ENCODE measurements at regions of chr17 and their contacts with region 1.

Region 1: GRCh38 chr17:7687908-7688807 is at the start of gene WRAP53:
- DNase-seq: peak; percentile 99
- H3K4me3 ChIP-seq: peak within 1 kb of the TSS; percentile 75 to 96 (median 79)
- H3K27ac ChIP-seq: peak within 1 kb of the TSS; percentile 93
- H3K4me1 ChIP-seq: peaks cover 26% of the 10 kb centered on the region
- H3K27me3 ChIP-seq: no peaks in the 10 kb centered on the region
- CTCF ChIP-seq: peak; percentile 97 to 99
- POLR2A ChIP-seq: peak; percentile 70
- total RNA-seq, gene WRAP53: 23.7 and 28.0 TPM in 2 replicates

Region 2: DNA sequence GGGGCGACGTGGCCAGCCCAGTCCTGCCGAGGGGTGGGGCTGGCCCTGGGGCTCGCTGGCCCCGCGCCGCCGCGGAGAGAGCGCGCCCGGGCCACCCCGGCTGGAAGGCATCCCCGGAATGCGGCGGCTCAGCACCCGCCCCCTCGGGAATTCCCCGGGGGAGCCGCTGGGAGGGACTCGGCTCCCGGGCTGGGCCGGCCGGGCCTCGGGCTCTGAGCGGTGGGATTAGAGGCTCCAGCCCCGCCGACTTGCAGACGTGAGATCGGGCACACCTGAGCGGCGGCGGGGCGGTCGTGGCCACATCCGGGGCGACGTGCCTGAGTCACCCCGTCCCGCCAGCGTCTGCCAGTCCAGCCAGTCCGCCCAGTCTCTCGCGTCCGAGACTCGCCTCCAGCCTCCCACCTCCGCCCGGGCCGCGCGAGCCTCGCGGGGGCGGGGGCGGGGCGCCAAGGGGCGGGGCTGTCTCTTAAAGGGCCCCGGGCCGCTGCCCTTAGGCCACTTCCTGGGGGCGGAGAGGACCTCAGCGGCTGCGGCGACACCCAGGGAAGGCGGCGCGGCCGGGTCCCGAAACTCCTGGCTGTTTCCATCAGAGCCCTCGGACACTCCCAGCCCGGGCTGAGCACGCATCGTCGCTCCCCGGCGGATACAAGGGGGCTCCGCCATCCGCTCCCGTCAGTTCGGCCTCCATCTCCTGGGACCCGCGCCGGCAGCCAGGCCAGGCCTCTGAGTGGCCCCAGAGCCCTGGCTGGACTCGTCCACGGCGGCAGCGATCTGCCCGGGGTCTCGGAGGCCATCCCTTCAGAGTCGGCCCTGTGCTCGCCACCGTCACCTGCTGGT is 336.3 kb before region 1 on chr17 and contains the start of gene KCTD11:
- CTCF ChIA-PET with region 1: interaction called, 6 read pairs
- POLR2A ChIA-PET with region 1: no interaction called
- dilution Hi-C with region 1: no loop called
- intact Hi-C with region 1: loop called (anchors 5 kb)
- DNase-seq: peak; percentile 76
- H3K4me3 ChIP-seq: peak within 1 kb of the TSS; percentile 54 to 78 (median 70)
- H3K27ac ChIP-seq: peak within 1 kb of the TSS; percentile 78
- H3K4me1 ChIP-seq: peaks cover 17% of the 10 kb centered on the region
- H3K27me3 ChIP-seq: no peaks in the 10 kb centered on the region
- CTCF ChIP-seq: peak in 1 of 2 donors; percentile 69
- POLR2A ChIP-seq: peak; percentile 57
- total RNA-seq, gene KCTD11: 3.5 and 3.8 TPM in 2 replicates

Region 3: DNA sequence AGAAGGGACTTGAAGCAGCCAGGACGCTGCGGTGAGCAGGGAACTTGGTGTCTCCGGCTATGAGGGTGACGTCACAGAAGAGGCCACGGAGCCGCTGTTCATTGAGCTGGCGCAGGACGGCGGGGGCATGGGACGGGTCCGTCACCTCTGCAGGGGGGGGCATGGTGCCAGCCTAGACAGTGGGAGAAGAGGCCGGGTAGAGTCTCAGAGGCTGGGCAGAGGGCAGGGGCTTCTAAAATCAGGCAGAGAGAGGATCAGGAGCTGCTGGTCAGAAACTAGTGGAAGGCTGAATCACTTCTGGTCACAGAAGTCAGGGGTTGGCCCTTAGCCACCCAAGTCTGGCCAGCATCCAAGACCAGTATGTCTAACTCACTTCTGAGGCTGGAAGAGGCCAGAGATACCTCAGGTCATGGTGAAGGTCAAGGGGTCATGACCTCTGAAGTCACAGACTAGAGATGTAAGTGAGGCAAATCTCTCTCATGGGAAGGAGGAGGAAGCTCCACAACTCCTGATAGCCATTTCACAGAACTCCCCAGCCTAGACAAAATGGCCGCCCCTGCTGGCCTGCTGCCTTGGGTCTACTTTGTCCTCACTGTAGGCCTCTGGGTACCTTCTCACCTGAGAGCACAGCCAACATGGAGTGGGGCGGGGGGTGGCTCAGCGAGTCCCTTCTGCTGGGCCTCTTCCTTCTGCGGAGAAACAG is 221.4 kb before region 1 on chr17:
- CTCF ChIA-PET with region 1: no interaction called
- POLR2A ChIA-PET with region 1: no interaction called
- dilution Hi-C with region 1: no loop called
- intact Hi-C with region 1: no loop called
- DNase-seq: peak; percentile 53
- H3K4me3 ChIP-seq: no peak overlapping the region
- H3K27ac ChIP-seq: no peak overlapping the region
- H3K4me1 ChIP-seq: no peaks in the 10 kb centered on the region
- H3K27me3 ChIP-seq: no peaks in the 10 kb centered on the region
- CTCF ChIP-seq: no peak
- POLR2A ChIP-seq: no peak

Region 4: DNA sequence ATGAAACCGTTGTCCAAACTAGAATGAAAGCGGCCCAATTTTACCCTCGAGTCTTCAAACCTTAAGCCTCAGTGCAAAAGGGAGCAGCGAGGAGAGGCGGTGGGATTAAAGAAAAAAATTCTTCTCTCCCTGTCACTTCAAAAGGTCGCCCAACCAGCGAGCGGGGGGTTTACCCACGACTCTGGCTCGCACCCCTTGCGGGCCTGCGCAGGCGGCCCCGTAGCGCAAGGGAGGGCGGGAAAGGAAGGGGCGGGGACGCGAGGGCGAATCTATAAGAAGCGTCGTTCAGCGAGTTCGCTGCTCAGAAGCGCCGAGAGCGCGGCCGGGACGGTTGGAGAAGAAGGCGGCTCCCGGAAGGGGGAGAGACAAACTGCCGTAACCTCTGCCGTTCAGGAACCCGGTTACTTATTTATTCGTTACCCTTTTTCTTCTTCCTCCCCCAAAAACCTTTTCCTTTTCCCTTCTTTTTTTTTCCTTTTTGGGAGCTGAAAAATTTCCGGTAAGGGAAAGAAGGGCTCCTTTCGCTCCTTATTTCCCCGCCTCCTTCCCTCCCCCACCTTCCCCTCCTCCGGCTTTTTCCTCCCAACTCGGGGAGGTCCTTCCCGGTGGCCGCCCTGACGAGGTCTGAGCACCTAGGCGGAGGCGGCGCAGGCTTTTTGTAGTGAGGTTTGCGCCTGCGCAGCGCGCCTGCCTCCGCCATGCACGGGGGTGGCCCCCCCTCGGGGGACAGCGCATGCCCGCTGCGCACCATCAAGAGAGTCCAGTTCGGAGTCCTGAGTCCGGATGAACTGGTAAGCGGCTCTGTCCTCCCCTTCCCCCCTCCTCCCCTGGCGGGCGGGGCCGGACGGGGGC is 203.9 kb before region 1 on chr17 and contains the start of gene POLR2A:
- CTCF ChIA-PET with region 1: no interaction called
- POLR2A ChIA-PET with region 1: no interaction called
- dilution Hi-C with region 1: no loop called
- intact Hi-C with region 1: loop called (anchors 10 kb)
- DNase-seq: peak; percentile 99
- H3K4me3 ChIP-seq: peak within 1 kb of the TSS; percentile 45 to 88 (median 76)
- H3K27ac ChIP-seq: peak within 1 kb of the TSS; percentile 100
- H3K4me1 ChIP-seq: peaks cover 28% of the 10 kb centered on the region
- H3K27me3 ChIP-seq: no peaks in the 10 kb centered on the region
- CTCF ChIP-seq: no peak
- POLR2A ChIP-seq: peak; percentile 100
- total RNA-seq, gene POLR2A: 145 and 151 TPM in 2 replicates

Region 5: GRCh38 chr17:7614422-7615264 is 73.5 kb before region 1 on chr17 and contains the start of gene FXR2:
- CTCF ChIA-PET with region 1: interaction called, 11 read pairs
- POLR2A ChIA-PET with region 1: interaction called, 7 read pairs
- dilution Hi-C with region 1: no loop called
- intact Hi-C with region 1: loop called (anchors 1 kb)
- DNase-seq: peak; percentile 100
- H3K4me3 ChIP-seq: peak within 1 kb of the TSS; percentile 55 to 97 (median 73)
- H3K27ac ChIP-seq: peak within 1 kb of the TSS; percentile 56
- H3K4me1 ChIP-seq: peaks cover 24% of the 10 kb centered on the region
- H3K27me3 ChIP-seq: no peaks in the 10 kb centered on the region
- CTCF ChIP-seq: peak; percentile 68 to 79
- POLR2A ChIP-seq: peak; percentile 67
- total RNA-seq, gene FXR2: 33.1 and 40.1 TPM in 2 replicates

Region 6: DNA sequence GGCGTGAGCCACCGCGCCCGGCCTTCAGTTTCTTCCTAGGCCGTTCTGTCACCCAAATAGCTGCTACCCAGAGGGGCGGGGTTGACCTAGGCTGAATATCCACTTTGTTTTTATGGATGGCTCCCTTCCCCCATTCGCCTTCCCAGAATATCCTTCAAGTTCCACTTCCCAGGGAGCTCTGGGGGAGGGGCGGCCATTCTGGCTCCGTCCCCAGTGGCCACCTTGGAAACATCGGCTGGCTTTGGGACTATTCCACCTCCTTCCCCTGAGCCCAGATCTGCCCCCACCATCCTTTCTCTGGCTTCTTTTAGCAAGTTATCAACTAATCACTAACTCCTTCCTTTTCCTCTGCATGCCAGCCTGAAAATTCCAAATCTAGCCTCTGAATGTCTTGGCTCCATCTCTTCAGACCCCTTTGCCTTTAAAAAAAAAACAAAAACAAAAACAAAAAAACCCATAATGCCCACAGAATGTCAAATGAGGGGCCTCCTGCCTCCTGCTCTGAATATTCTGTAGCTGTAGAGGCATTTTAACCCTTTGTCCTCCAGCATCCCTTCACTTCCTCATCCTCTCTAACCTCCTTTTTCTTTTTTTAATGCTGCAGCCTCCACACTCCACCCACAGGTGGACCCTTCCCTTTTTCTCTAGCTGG is 31.1 kb before region 1 on chr17:
- CTCF ChIA-PET with region 1: interaction called, 11 read pairs
- POLR2A ChIA-PET with region 1: interaction called, 12 read pairs
- dilution Hi-C with region 1: no loop called
- intact Hi-C with region 1: no loop called
- DNase-seq: no peak
- H3K4me3 ChIP-seq: no peak overlapping the region
- H3K27ac ChIP-seq: no peak overlapping the region
- H3K4me1 ChIP-seq: no peaks in the 10 kb centered on the region
- H3K27me3 ChIP-seq: peaks cover 18 to 24% of the 10 kb centered on the region in 2 experiments
- CTCF ChIP-seq: no peak
- POLR2A ChIP-seq: no peak

Region 7: DNA sequence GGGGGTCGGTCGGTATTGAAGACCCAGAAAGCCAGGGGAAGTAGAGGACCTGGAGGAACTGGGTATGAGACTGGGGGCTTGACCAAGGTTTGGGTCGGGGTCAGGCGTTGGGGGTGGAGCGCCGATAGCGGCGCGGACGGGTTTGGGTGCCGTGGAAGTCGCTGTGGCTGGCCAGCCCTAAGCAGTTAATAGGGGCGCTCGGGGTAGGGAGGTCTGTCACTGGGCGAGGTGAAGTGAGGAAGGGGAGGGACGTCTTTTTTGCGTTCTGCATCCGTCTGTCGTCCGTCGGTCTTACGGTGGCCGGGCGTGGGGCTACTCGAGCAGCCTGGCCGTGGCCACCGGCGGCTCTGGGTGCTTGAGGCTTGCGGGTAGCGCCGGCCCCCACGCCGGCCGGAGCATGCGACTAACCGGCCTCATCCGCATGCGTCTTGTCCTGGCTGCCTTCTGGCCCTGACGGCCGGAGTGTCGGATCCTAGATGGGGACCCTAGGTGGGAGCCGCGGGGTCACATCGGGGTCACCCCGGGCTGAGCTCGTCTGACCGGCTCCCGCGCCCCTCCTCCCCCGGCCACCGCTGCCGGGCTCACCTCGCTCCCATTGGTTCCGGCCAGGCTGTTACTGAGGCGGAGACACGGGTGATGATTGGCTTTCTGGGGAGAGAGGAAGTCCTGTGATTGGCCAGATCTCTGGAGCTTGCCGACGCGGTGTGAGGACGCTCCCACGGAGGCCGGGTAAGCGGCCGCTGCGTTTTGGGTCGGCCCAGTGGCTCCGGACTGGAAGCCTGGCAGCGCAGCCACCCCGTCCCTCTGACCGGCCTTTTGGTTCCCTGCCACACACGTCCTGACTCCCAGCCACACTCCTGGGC is 156.4 kb after region 1 on chr17:
- CTCF ChIA-PET with region 1: no interaction called
- POLR2A ChIA-PET with region 1: no interaction called
- dilution Hi-C with region 1: no loop called
- intact Hi-C with region 1: loop called (anchors 5 kb)
- DNase-seq: peak; percentile 92
- H3K4me3 ChIP-seq: peak overlapping the region; percentile 45 to 71 (median 60)
- H3K27ac ChIP-seq: peak overlapping the region; percentile 99
- H3K4me1 ChIP-seq: peaks cover 14% of the 10 kb centered on the region
- H3K27me3 ChIP-seq: no peaks in the 10 kb centered on the region
- CTCF ChIP-seq: no peak
- POLR2A ChIP-seq: peak; percentile 52